ENCODE measurements at regions of chr12 and their contacts with region 1.

Region 1: DNA sequence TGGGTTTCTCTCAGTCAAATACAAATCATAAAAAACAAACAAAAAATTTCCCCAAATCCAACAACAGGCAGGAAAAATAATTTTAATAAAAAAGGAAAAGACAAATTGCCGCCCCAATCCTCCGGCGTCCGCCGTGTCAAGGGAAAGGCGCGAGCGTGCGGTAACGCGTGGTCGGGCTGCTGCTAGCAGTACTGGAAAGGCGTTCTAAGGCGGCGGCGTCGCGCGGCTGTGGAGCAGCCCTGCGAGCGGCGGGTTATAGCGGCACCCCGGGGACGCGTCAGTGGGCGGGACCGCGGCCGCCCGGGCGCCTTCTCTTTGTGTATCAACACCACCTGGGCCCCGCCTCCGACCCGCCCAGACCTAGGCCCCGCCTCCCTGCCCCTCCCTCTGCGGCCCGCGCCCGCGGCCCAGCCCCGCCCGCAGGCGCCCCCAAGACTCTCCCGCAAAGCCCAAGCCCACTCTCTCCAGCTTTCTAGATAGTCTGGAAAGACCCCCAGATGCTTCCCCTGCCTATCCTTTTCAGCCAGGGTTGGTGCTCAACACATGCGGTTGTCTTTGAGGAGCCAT is at the start of gene SLC38A2:
- DNase-seq: peak; percentile 94 to 96 (median 95)
- H3K4me3 ChIP-seq: peak within 1 kb of the TSS; percentile 76 to 93
- H3K4me3 Mint-ChIP-seq: peak within 1 kb of the TSS; percentile 94 to 99 (median 96)
- H3K27ac ChIP-seq: peak within 1 kb of the TSS; percentile 88
- H3K27ac Mint-ChIP-seq: peak within 1 kb of the TSS; percentile 93 to 99 (median 99)
- H3K4me1 ChIP-seq: peaks cover 54% of the 10 kb centered on the region
- H3K4me1 Mint-ChIP-seq: peaks cover 39 to 68% (median 44%) of the 10 kb centered on the region in 4 donors
- H3K27me3 ChIP-seq: no peaks in the 10 kb centered on the region
- H3K27me3 Mint-ChIP-seq: peaks cover 0 to 6% of the 10 kb centered on the region in 2 donors
- total RNA-seq, gene SLC38A2: 200 to 208 TPM

Region 2: DNA sequence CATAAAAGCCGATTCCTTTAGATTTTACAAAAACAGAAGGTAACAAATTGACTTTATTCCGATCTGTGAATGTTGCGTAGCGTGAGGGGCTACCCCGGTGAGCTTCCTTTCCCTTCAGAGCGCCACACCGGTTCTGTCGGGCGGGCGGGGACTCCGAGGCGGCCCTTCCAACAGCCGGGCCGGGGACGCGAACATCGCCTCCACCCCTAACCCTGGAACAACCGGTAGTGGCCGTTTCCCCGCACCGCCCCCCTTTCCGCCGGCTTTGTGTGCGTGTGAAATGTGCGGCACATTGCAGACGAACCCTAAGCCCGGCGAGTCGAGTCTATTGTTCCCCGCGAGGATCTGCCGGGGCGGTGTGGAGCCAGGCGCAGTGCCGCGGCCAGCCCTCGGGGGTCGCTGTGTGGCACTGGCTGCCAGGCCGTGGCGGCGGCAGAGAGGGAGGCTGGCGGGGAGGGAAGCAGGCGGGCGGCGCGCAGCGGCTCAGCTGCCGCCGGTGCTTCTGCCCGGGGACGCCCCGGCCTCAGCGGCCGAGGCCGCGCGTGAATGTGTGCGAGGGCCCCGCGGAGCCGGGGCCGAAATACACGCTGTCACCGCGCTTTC is 643.9 kb before region 1 on chr12:
- CTCF ChIA-PET with region 1: no interaction called
- POLR2A ChIA-PET with region 1: no interaction called
- intact Hi-C with region 1: loop called (anchors 2 kb)
- DNase-seq: peak; percentile 97 to 98 (median 98)
- H3K4me3 ChIP-seq: peak overlapping the region; percentile 78 to 89
- H3K4me3 Mint-ChIP-seq: peak overlapping the region; percentile 92 to 100 (median 100)
- H3K27ac ChIP-seq: peak overlapping the region; percentile 98
- H3K27ac Mint-ChIP-seq: peak overlapping the region; percentile 87 to 99 (median 99)
- H3K4me1 ChIP-seq: peaks cover 41% of the 10 kb centered on the region
- H3K4me1 Mint-ChIP-seq: peaks cover 18 to 56% (median 24%) of the 10 kb centered on the region in 4 donors
- H3K27me3 ChIP-seq: no peaks in the 10 kb centered on the region
- H3K27me3 Mint-ChIP-seq: no peaks in the 10 kb centered on the region

Region 3: DNA sequence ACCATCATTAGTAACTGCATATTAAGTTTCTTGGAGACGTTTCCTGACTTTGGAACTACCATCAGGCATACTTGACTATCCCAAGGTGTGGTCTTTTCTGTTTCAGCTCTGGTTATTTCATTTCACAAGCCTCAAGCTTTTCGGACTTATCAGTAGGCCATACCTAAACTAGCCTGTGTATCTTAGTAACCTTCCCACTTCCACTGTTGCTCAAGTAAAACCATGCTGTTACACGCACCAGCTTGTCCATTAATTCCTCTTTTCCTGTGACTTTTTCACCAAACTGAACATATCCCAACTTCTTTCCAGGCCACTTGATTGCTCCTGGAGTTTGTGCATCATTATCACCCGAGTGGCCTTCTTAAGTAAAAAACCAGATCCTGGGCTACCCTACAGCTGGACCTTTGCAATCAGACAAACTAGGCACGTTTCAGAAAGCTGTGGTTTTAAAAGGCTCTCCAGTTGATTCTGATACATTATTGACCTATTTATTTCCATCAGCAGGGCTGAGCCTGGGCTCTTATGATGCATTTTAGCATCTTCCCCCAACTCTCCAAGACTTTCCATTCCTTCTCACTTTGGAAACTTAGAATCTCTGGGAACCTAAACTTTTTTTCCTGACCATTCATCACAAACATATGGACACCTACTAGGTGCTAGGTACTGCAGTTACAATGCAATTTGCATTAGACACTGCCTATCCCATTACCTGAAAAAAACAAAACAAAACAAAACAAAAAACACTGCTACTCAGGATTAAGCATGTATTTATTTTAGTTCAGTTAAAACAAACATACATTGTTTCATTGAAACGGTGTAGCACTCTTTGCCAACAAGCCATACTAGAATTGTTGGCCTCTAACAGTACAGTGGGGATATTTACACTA is 14.9 kb before region 1 on chr12:
- CTCF ChIA-PET with region 1: interaction called, 7 read pairs
- POLR2A ChIA-PET with region 1: interaction called, 28 read pairs
- intact Hi-C with region 1: no loop called
- DNase-seq: no peak
- H3K4me3 ChIP-seq: no peak overlapping the region
- H3K4me3 Mint-ChIP-seq: no peak overlapping the region
- H3K27ac ChIP-seq: no peak overlapping the region
- H3K27ac Mint-ChIP-seq: peak overlapping the region in 5 of 7 donors; percentile 4 to 77 (median 5)
- H3K4me1 ChIP-seq: peaks cover 20% of the 10 kb centered on the region
- H3K4me1 Mint-ChIP-seq: peaks cover 13 to 48% (median 34%) of the 10 kb centered on the region in 4 donors
- H3K27me3 ChIP-seq: no peaks in the 10 kb centered on the region
- H3K27me3 Mint-ChIP-seq: no peaks in the 10 kb centered on the region

Region 4: GRCh38 chr12:46401662-46402061 is 29.0 kb after region 1 on chr12:
- CTCF ChIA-PET with region 1: no interaction called
- POLR2A ChIA-PET with region 1: interaction called, 3 read pairs
- intact Hi-C with region 1: loop called (anchors 1 kb)
- DNase-seq: no peak
- H3K4me3 ChIP-seq: no peak overlapping the region
- H3K4me3 Mint-ChIP-seq: no peak overlapping the region
- H3K27ac ChIP-seq: no peak overlapping the region
- H3K27ac Mint-ChIP-seq: peak overlapping the region in 2 of 7 donors; percentile 20 to 48
- H3K4me1 ChIP-seq: peaks cover 20% of the 10 kb centered on the region
- H3K4me1 Mint-ChIP-seq: peaks cover 35 to 57% (median 42%) of the 10 kb centered on the region in 4 donors
- H3K27me3 ChIP-seq: no peaks in the 10 kb centered on the region
- H3K27me3 Mint-ChIP-seq: no peaks in the 10 kb centered on the region

Region 5: GRCh38 chr12:46523863-46524770 is 151.5 kb after region 1 on chr12:
- CTCF ChIA-PET with region 1: interaction called, 12 read pairs
- POLR2A ChIA-PET with region 1: interaction called, 25 read pairs
- intact Hi-C with region 1: loop called (anchors 5 kb)
- DNase-seq: peak; percentile 52 to 65 (median 56)
- H3K4me3 ChIP-seq: peak overlapping the region in 1 of 2 donors; percentile 21
- H3K4me3 Mint-ChIP-seq: peak overlapping the region; percentile 64 to 79 (median 78)
- H3K27ac ChIP-seq: peak overlapping the region; percentile 51
- H3K27ac Mint-ChIP-seq: peak overlapping the region; percentile 66 to 95 (median 94)
- H3K4me1 ChIP-seq: peaks cover 18% of the 10 kb centered on the region
- H3K4me1 Mint-ChIP-seq: peaks cover 17 to 32% (median 25%) of the 10 kb centered on the region in 4 donors
- H3K27me3 ChIP-seq: no peaks in the 10 kb centered on the region
- H3K27me3 Mint-ChIP-seq: no peaks in the 10 kb centered on the region

Region 6: GRCh38 chr12:46608431-46609272 is 236.0 kb after region 1 on chr12:
- CTCF ChIA-PET with region 1: interaction called, 3 read pairs
- POLR2A ChIA-PET with region 1: interaction called, 14 read pairs
- intact Hi-C with region 1: loop called (anchors 5 kb)
- DNase-seq: no peak
- H3K4me3 ChIP-seq: no peak overlapping the region
- H3K4me3 Mint-ChIP-seq: peak overlapping the region in 7 of 8 donors; percentile 57 to 78 (median 73)
- H3K27ac ChIP-seq: no peak overlapping the region
- H3K27ac Mint-ChIP-seq: peak overlapping the region; percentile 6 to 84 (median 58)
- H3K4me1 ChIP-seq: peaks cover 29% of the 10 kb centered on the region
- H3K4me1 Mint-ChIP-seq: peaks cover 33 to 65% (median 47%) of the 10 kb centered on the region in 4 donors
- H3K27me3 ChIP-seq: no peaks in the 10 kb centered on the region
- H3K27me3 Mint-ChIP-seq: no peaks in the 10 kb centered on the region